Upper lobe of right lung (tissue), 1 donor: ENCODE measurements at regions of chr4 and their contacts with region 1.

Region 1: DNA sequence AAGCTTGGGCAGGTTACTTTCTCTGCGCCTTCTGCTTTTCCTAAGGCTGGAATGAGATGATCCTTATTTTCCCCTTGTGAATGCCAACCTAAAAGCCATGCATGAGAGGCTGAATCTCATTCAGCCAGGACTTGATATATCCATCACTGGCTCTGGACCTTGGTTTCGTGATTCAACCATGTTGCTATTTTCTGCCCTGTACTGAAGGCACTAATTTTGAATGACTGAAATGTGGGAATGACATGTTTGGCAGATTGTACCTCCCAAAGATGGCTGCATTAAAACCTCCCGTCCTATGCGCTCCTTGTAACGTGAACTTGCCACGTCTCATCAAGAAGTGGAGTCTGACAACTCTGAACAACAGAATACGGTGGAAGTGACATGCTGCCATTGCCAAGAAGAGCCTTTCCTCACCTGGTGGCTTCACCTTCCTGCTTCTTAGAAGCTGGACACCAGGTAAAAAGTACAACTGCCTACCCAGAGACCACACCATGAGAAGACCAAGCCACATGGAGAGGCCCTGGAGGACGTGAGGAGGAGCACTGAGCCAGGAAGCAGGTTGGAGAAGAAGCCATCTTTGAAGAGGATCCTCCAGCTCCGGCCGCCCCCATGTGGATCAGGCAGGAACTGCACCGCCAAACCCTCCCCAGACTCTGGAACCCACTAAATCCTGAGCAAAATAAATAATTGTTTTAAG is 174.5 kb downstream of the NSUN7 start:
- DNase-seq: peak; percentile 86
- ATAC-seq: peak; percentile 89
- H3K4me3 ChIP-seq: no peak overlapping the region
- H3K27ac ChIP-seq: peak overlapping the region; percentile 34
- H3K4me1 ChIP-seq: peaks cover 9% of the 10 kb centered on the region
- H3K27me3 ChIP-seq: no peaks in the 10 kb centered on the region
- CTCF ChIP-seq: peak; percentile 94

Region 2: GRCh38 chr4:40601641-40602040 is 322.6 kb before region 1 on chr4:
- intact Hi-C with region 1: no loop called
- DNase-seq: no peak
- ATAC-seq: peak; percentile 64
- H3K4me3 ChIP-seq: no peak overlapping the region
- H3K27ac ChIP-seq: peak overlapping the region; percentile 51
- H3K4me1 ChIP-seq: peaks cover 4% of the 10 kb centered on the region
- H3K27me3 ChIP-seq: no peaks in the 10 kb centered on the region
- CTCF ChIP-seq: no peak

Region 3: DNA sequence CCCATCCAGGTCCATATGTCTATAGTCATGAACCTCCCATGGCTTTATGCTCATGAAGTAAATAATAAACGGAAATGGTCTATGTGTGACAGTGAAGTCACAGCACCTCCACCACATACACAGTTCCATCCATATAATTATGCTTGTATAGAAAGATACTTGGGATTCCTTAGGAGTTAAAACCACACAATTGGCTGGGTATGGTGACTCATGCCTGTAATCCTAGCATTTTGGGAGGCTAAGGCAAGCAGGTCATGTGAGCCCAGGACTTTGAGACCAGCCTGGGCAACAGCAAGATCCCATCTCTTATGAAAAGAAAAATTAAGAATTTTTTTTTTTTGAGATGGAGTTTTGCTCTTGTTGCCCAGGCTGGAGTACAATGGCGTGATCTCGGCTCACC is 238.9 kb before region 1 on chr4:
- intact Hi-C with region 1: no loop called
- DNase-seq: no peak
- ATAC-seq: no peak
- H3K4me3 ChIP-seq: no peak overlapping the region
- H3K27ac ChIP-seq: no peak overlapping the region
- H3K4me1 ChIP-seq: no peaks in the 10 kb centered on the region
- H3K27me3 ChIP-seq: no peaks in the 10 kb centered on the region
- CTCF ChIP-seq: no peak

Region 4: GRCh38 chr4:40976343-40976742 is 52.1 kb after region 1 on chr4:
- intact Hi-C with region 1: loop called (anchors 10 kb)
- DNase-seq: no peak
- ATAC-seq: peak; percentile 69
- H3K4me3 ChIP-seq: no peak overlapping the region
- H3K27ac ChIP-seq: no peak overlapping the region
- H3K4me1 ChIP-seq: peaks cover 4% of the 10 kb centered on the region
- H3K27me3 ChIP-seq: no peaks in the 10 kb centered on the region
- CTCF ChIP-seq: peak; percentile 78